Aorta (tissue), 5 donors: ENCODE measurements at regions of chr17 and their contacts with region 1.

Region 1: GRCh38 chr17:45098869-45099616 is 33.3 kb downstream of the PLCD3 start:
- DNase-seq: peak; percentile 93 to 96
- ATAC-seq: peak; percentile 91
- H3K4me3 ChIP-seq: no peak overlapping the region
- H3K27ac ChIP-seq: peak overlapping the region in 1 of 2 donors; percentile 44
- H3K4me1 ChIP-seq: no peaks in the 10 kb centered on the region
- H3K27me3 ChIP-seq: no peaks in the 10 kb centered on the region

Region 2: DNA sequence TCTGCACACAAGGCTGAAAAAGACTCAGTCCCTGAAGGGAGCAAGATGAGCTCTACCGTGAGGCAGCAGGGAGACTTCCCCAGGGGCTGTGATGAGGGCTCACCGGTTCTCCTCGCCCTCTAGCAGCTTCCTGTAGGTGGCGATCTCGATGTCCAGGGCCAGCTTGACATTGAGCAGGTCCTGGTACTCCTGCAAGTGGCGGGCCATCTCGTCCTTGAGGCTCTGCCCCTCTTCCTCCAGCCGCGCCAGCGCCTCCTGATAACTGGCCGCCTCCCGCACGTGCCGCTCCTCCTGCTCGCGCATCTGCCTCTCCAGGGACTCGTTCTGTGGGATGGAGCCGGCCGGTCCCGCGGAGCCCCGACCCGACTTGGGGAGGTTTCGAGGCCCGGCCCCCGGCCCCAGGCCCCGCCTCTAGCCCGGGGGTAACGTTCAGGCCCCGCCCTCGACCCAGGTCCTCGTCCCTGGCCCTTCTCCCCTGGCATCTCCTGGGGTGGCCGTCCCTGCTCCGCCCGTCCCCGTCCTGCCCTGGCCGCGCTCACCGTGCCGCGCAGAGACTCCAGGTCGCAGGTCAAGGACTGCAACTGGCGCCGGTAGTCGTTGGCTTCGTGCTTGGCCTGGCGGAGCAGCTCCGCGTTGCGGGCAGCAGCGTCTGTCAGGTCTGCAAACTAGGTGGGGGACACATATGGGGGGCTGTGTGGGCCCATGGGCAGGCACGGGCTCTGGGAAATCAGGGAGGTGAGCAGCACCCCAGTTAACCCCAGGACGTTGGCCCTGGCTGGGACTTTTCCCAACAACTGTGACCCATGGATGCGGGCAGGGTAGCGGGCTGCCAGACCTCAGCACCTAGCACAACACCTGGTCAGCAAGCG is 187.7 kb before region 1 on chr17:
- intact Hi-C with region 1: loop called in 1 of 2 experiments (anchors 2 kb)
- DNase-seq: peak; percentile 75 to 87
- ATAC-seq: no peak
- H3K4me3 ChIP-seq: no peak overlapping the region
- H3K27ac ChIP-seq: no peak overlapping the region
- H3K4me1 ChIP-seq: no peaks in the 10 kb centered on the region
- H3K27me3 ChIP-seq: no peaks in the 10 kb centered on the region

Region 3: DNA sequence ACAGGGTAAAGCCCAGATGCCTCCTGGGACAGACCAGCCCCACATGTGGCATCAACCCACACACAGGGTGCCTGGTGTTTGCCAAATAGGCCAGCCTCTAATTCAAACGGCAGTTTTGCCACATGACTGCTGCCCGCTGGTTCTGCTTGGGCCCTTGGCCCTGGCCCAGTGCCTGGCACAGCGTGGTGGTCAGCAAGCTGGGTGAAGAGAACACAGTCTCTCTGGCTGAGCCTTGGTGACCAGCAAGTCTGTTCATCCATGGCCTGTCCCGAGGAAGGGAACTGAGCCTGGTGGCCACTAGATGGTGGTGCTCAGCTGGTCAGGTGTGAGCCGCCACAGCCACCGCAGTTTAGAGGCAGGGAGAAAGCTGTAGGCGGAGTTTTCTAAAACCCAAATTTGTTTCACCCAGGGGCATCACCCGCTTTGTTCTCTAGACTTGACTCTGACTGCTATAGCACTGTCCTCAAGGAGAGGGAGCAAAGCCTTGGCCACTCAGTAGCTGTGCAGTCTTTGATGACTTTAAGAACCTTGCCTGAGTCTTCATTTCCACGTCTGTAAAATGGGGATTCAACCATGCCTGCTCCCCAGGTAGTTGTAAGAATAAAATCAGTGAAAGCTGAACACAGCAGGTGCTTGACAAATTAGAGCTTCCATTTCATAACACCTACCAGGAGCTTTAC is 179.0 kb before region 1 on chr17:
- intact Hi-C with region 1: loop called in 1 of 2 experiments (anchors 5 kb)
- DNase-seq: peak; percentile 87 to 92
- ATAC-seq: peak; percentile 87
- H3K4me3 ChIP-seq: no peak overlapping the region
- H3K27ac ChIP-seq: no peak overlapping the region
- H3K4me1 ChIP-seq: no peaks in the 10 kb centered on the region
- H3K27me3 ChIP-seq: no peaks in the 10 kb centered on the region

Region 4: DNA sequence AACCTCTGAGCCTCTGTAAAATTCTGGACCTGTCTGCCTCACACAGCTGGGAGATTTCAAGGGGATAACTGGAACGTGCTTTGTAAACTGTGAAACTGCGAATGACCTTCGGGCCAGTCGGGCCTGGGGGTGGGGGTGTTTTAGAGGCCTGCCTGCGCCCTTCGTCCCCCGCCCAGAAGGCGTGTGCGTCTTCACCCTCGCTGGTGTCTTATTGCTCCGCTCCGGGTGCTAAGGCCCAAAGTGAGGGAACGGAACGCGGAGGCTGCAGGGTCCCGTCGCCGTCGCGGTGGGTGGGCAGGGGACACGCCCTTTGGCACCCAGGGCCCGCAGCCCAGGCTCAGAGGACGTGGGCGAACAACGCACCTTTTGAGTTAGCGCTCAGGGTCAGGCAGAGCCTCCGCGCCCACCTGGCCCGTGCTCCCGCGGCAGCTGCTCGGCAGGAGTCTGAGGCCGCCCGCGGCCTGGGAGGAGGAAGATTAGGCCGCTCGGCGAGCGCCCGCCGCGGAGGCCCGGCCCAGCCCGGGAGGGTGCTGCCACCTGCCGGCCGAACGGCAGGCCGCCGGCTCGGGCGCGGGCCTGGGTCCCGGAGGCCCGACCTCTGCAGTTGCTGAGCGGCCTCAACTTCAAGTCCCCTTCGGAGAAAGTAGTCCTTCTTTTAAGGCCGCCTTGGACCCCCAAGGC is 77.3 kb before region 1 on chr17:
- intact Hi-C with region 1: loop called in 1 of 2 experiments (anchors 2 kb)
- DNase-seq: peak; percentile 79 to 92
- ATAC-seq: peak; percentile 91
- H3K4me3 ChIP-seq: no peak overlapping the region
- H3K27ac ChIP-seq: no peak overlapping the region
- H3K4me1 ChIP-seq: no peaks in the 10 kb centered on the region
- H3K27me3 ChIP-seq: no peaks in the 10 kb centered on the region

Region 5: GRCh38 chr17:45060797-45061605 is 38.0 kb before region 1 on chr17 and contains the start of gene NMT1:
- intact Hi-C with region 1: loop called in 1 of 2 experiments (anchors 5 kb)
- DNase-seq: peak; percentile 98
- ATAC-seq: peak; percentile 99
- H3K4me3 ChIP-seq: peak within 1 kb of the TSS; percentile 79 to 95
- H3K27ac ChIP-seq: peak within 1 kb of the TSS; percentile 34 to 94
- H3K4me1 ChIP-seq: peaks cover 0 to 3% of the 10 kb centered on the region in 2 donors
- H3K27me3 ChIP-seq: no peaks in the 10 kb centered on the region
- total RNA-seq, gene NMT1: 103 to 104 TPM

Region 6: GRCh38 chr17:45197555-45198334 is 98.7 kb after region 1 on chr17:
- intact Hi-C with region 1: no loop called
- DNase-seq: peak; percentile 94 to 98
- ATAC-seq: peak; percentile 97
- H3K4me3 ChIP-seq: no peak overlapping the region
- H3K27ac ChIP-seq: no peak overlapping the region
- H3K4me1 ChIP-seq: no peaks in the 10 kb centered on the region
- H3K27me3 ChIP-seq: no peaks in the 10 kb centered on the region